PC-3 (cell line): ENCODE measurements at regions of chr2 and their contacts with region 1.

Region 1: GRCh38 chr2:14572633-14573032 is 59.9 kb upstream of the LRATD1 start:
- DNase-seq: no peak
- ATAC-seq: peak; percentile 47
- H3K4me3 ChIP-seq: no peak overlapping the region
- H3K27ac ChIP-seq: no peak overlapping the region
- H3K4me1 ChIP-seq: peaks cover 5% of the 10 kb centered on the region
- H3K27me3 ChIP-seq: no peaks in the 10 kb centered on the region
- CTCF ChIP-seq: no peak

Region 2: GRCh38 chr2:14524057-14524802 is 48.4 kb before region 1 on chr2:
- CTCF ChIA-PET with region 1: no interaction called
- POLR2A ChIA-PET with region 1: no interaction called
- intact Hi-C with region 1: loop called (anchors 2 kb)
- DNase-seq: peak; percentile 93
- ATAC-seq: peak; percentile 94
- H3K4me3 ChIP-seq: peak overlapping the region; percentile 29; the same call in 1 of the 2 replicates
- H3K27ac ChIP-seq: peak overlapping the region; percentile 95
- H3K4me1 ChIP-seq: peaks cover 45% of the 10 kb centered on the region
- H3K27me3 ChIP-seq: no peaks in the 10 kb centered on the region
- CTCF ChIP-seq: peak; percentile 18; the same call in 1 of the 2 replicates

Region 3: DNA sequence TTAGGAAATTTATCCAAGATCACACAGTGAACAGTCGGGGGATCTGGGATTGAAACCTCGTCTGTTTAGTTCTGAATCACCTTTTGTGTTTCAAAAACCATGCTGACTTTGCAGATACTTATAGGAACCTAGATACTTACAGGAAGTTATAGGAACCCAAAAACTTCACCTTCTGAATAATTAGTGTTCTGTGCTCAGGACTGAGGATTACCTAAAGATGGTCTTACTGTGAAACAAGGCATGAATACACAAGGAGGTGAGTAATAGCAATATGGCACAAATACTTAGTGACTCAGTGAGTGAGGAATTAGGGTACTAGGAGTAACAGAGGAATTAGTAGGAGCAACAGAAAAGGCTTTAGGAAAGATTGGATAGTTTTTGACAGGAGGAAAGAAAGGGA is 205.4 kb after region 1 on chr2:
- CTCF ChIA-PET with region 1: no interaction called
- POLR2A ChIA-PET with region 1: no interaction called
- intact Hi-C with region 1: no loop called
- DNase-seq: peak; percentile 85
- ATAC-seq: peak; percentile 75
- H3K4me3 ChIP-seq: no peak overlapping the region; the same call in 1 of the 2 replicates
- H3K27ac ChIP-seq: peak overlapping the region; percentile 94
- H3K4me1 ChIP-seq: peaks cover 49% of the 10 kb centered on the region
- H3K27me3 ChIP-seq: no peaks in the 10 kb centered on the region
- CTCF ChIP-seq: no peak